ENCODE measurements at regions of chr15 and their contacts with region 1.

Region 1: DNA sequence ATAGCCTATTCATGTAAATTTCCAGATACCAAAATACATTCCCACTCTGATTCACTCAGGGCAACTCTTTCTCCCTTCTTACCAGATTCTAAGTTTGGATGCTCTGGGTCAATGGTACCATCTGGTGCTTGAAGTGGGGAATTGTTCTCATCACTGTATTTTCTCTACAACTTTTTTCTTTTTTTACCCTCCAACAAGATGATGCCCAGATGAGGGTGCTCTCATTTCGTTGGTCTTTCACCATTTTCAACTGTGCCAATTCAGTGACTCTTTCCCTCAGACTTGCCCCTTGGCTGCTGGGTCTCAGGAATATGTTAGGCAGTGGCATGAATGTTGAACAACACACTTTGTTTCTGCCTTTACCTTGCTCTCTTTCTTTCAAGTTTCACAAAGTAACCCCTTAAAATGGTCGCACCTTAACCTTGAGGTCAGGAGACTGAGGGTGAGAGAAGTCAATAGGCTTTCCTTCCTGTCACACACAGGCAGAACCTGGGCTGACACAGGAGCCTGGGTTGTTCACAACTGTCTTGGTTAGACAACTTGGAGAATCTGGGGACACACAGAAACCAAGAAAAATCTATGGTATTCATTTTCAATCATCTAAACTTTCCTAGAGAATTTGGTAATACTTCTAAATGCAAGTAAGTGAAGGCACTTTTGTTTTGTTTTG is 330.7 kb upstream of the SLCO3A1 start:
- DNase-seq: peak; percentile 41
- H3K4me3 ChIP-seq: no peak overlapping the region
- H3K27ac ChIP-seq: no peak overlapping the region
- H3K27me3 ChIP-seq: no peaks in the 10 kb centered on the region
- CTCF ChIP-seq: peak; percentile 75

Region 2: GRCh38 chr15:91302588-91303439 is 220.0 kb before region 1 on chr15:
- CTCF ChIA-PET with region 1: interaction called, 35 read pairs
- POLR2A ChIA-PET with region 1: no interaction called
- DNase-seq: peak; percentile 30
- H3K4me3 ChIP-seq: no peak overlapping the region
- H3K27ac ChIP-seq: no peak overlapping the region
- H3K27me3 ChIP-seq: peaks cover 5% of the 10 kb centered on the region
- CTCF ChIP-seq: peak; percentile 81